ENCODE measurements at regions of chr5 and their contacts with region 1.

Region 1: GRCh38 chr5:56838409-56839039 is 23.2 kb downstream of the MAP3K1 start:
- DNase-seq: peak in 7 of 9 donors; percentile 33 to 61 (median 48)
- ATAC-seq: peak; percentile 75
- H3K4me3 ChIP-seq: no peak overlapping the region
- H3K4me3 Mint-ChIP-seq: peak overlapping the region; percentile 19 to 79 (median 57)
- H3K27ac ChIP-seq: peak overlapping the region; percentile 42
- H3K27ac Mint-ChIP-seq: peak overlapping the region; percentile 8 to 95 (median 78)
- H3K4me1 ChIP-seq: peaks cover 8 to 87% of the 10 kb centered on the region in 2 donors
- H3K4me1 Mint-ChIP-seq: peaks cover 63 to 95% (median 90%) of the 10 kb centered on the region in 7 donors
- H3K27me3 ChIP-seq: no peaks in the 10 kb centered on the region
- H3K27me3 Mint-ChIP-seq: no peaks in the 10 kb centered on the region

Region 2: GRCh38 chr5:55936100-55936693 is 902.3 kb before region 1 on chr5:
- CTCF ChIA-PET with region 1: interaction called, 3 read pairs
- POLR2A ChIA-PET with region 1: no interaction called
- intact Hi-C with region 1: loop called (anchors 1 to 5 kb)
- DNase-seq: peak; percentile 44 to 73 (median 66)
- ATAC-seq: peak; percentile 91
- H3K4me3 ChIP-seq: no peak overlapping the region
- H3K4me3 Mint-ChIP-seq: no peak overlapping the region
- H3K27ac ChIP-seq: no peak overlapping the region
- H3K27ac Mint-ChIP-seq: peak overlapping the region in 6 of 9 donors; percentile 11 to 84 (median 38)
- H3K4me1 ChIP-seq: no peaks in the 10 kb centered on the region
- H3K4me1 Mint-ChIP-seq: peaks cover 0 to 35% (median 14%) of the 10 kb centered on the region in 7 donors
- H3K27me3 ChIP-seq: no peaks in the 10 kb centered on the region
- H3K27me3 Mint-ChIP-seq: no peaks in the 10 kb centered on the region

Region 3: GRCh38 chr5:56264417-56265025 is 574.0 kb before region 1 on chr5:
- CTCF ChIA-PET with region 1: interaction called, 131 read pairs
- POLR2A ChIA-PET with region 1: no interaction called
- intact Hi-C with region 1: no loop called
- DNase-seq: peak in 3 of 9 donors; percentile 7 to 24 (median 9)
- ATAC-seq: peak; percentile 54
- H3K4me3 ChIP-seq: no peak overlapping the region
- H3K4me3 Mint-ChIP-seq: no peak overlapping the region
- H3K27ac ChIP-seq: no peak overlapping the region
- H3K27ac Mint-ChIP-seq: no peak overlapping the region
- H3K4me1 ChIP-seq: no peaks in the 10 kb centered on the region
- H3K4me1 Mint-ChIP-seq: peaks cover 2 to 4% (median 3%) of the 10 kb centered on the region in 7 donors
- H3K27me3 ChIP-seq: no peaks in the 10 kb centered on the region
- H3K27me3 Mint-ChIP-seq: peaks cover 0 to 19% (median 0%) of the 10 kb centered on the region in 5 donors

Region 4: GRCh38 chr5:56369361-56369811 is 469.1 kb before region 1 on chr5:
- CTCF ChIA-PET with region 1: no interaction called
- POLR2A ChIA-PET with region 1: no interaction called
- intact Hi-C with region 1: no loop called
- DNase-seq: no peak
- ATAC-seq: no peak
- H3K4me3 ChIP-seq: no peak overlapping the region
- H3K4me3 Mint-ChIP-seq: no peak overlapping the region
- H3K27ac ChIP-seq: no peak overlapping the region
- H3K27ac Mint-ChIP-seq: no peak overlapping the region
- H3K4me1 ChIP-seq: no peaks in the 10 kb centered on the region
- H3K4me1 Mint-ChIP-seq: no peaks in the 10 kb centered on the region
- H3K27me3 ChIP-seq: no peaks in the 10 kb centered on the region
- H3K27me3 Mint-ChIP-seq: peaks cover 0 to 1% (median 0%) of the 10 kb centered on the region in 5 donors

Region 5: GRCh38 chr5:56615361-56616153 is 223.0 kb before region 1 on chr5:
- CTCF ChIA-PET with region 1: no interaction called
- POLR2A ChIA-PET with region 1: no interaction called
- intact Hi-C with region 1: no loop called
- DNase-seq: no peak
- ATAC-seq: no peak
- H3K4me3 ChIP-seq: no peak overlapping the region
- H3K4me3 Mint-ChIP-seq: peak overlapping the region; percentile 35 to 80 (median 55)
- H3K27ac ChIP-seq: peak overlapping the region; percentile 56
- H3K27ac Mint-ChIP-seq: peak overlapping the region; percentile 56 to 89 (median 80)
- H3K4me1 ChIP-seq: peaks cover 27 to 59% of the 10 kb centered on the region in 2 donors
- H3K4me1 Mint-ChIP-seq: peaks cover 34 to 79% (median 64%) of the 10 kb centered on the region in 7 donors
- H3K27me3 ChIP-seq: no peaks in the 10 kb centered on the region
- H3K27me3 Mint-ChIP-seq: no peaks in the 10 kb centered on the region

Region 6: DNA sequence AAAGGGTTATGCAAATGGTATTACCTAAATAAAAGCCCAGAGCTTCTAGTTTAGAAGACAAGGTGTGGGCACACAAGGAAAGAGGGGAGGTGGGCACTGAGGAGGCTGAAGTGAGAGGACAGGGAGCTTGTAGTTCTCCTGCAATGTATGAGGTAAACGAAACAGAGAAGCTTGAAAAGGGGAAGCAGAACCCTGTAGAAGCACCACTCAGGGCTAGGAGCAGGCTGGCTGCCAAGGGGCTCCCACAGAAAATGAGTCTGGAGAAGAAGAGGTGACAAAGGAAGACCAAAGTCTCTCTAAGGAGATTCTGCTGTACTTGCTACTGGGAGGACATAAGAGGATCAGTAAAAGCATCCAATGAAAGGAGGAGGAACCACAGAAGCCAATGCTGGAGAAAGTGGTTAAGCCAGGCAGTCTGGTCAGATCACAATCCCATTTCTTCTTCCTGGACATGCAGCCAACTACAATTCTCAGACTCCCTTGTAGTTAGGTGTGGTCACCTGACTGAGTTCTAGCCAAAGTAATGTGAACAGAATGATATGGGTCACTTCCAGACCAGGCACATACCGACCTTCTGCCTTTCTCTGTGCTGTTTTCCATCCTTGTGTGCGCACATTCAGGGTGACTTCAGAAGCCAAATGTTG is 197.6 kb before region 1 on chr5:
- CTCF ChIA-PET with region 1: no interaction called
- POLR2A ChIA-PET with region 1: no interaction called
- intact Hi-C with region 1: no loop called
- DNase-seq: no peak
- ATAC-seq: no peak
- H3K4me3 ChIP-seq: no peak overlapping the region
- H3K4me3 Mint-ChIP-seq: no peak overlapping the region
- H3K27ac ChIP-seq: no peak overlapping the region
- H3K27ac Mint-ChIP-seq: peak overlapping the region in 1 of 9 donors; percentile 17
- H3K4me1 ChIP-seq: peaks cover 0 to 12% of the 10 kb centered on the region in 2 donors
- H3K4me1 Mint-ChIP-seq: peaks cover 0 to 57% (median 25%) of the 10 kb centered on the region in 7 donors
- H3K27me3 ChIP-seq: no peaks in the 10 kb centered on the region
- H3K27me3 Mint-ChIP-seq: peaks cover 0 to 18% (median 0%) of the 10 kb centered on the region in 5 donors

Region 7: DNA sequence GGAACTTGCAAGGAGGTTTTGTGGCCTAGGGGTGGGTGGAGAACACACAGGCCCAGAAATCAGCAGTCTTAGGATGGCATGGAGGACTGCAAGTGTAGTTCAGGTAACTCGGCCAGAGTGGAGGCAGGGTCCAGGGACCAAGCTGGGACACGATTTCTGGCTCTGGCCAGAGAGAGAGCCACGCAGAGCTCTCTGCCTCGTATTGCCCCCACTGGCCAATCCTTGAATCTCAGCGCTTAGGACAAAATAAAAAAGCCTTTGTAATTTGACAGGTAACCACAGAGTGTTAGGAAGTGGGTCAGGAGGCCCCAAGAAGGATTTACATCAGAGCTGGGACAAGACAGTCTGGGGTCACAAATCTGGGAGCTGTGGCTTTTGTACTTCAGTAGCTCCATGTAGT is 11.5 kb before region 1 on chr5:
- CTCF ChIA-PET with region 1: interaction called, 23 read pairs
- POLR2A ChIA-PET with region 1: interaction called, 6 read pairs
- intact Hi-C with region 1: no loop called
- DNase-seq: peak in 1 of 9 donors; percentile 34
- ATAC-seq: peak; percentile 37
- H3K4me3 ChIP-seq: no peak overlapping the region
- H3K4me3 Mint-ChIP-seq: peak overlapping the region; percentile 18 to 93 (median 59)
- H3K27ac ChIP-seq: peak overlapping the region; percentile 51
- H3K27ac Mint-ChIP-seq: peak overlapping the region in 8 of 9 donors; percentile 56 to 95 (median 80)
- H3K4me1 ChIP-seq: peaks cover 38 to 84% of the 10 kb centered on the region in 2 donors
- H3K4me1 Mint-ChIP-seq: peaks cover 75 to 100% (median 95%) of the 10 kb centered on the region in 7 donors
- H3K27me3 ChIP-seq: no peaks in the 10 kb centered on the region
- H3K27me3 Mint-ChIP-seq: no peaks in the 10 kb centered on the region

Region 8: DNA sequence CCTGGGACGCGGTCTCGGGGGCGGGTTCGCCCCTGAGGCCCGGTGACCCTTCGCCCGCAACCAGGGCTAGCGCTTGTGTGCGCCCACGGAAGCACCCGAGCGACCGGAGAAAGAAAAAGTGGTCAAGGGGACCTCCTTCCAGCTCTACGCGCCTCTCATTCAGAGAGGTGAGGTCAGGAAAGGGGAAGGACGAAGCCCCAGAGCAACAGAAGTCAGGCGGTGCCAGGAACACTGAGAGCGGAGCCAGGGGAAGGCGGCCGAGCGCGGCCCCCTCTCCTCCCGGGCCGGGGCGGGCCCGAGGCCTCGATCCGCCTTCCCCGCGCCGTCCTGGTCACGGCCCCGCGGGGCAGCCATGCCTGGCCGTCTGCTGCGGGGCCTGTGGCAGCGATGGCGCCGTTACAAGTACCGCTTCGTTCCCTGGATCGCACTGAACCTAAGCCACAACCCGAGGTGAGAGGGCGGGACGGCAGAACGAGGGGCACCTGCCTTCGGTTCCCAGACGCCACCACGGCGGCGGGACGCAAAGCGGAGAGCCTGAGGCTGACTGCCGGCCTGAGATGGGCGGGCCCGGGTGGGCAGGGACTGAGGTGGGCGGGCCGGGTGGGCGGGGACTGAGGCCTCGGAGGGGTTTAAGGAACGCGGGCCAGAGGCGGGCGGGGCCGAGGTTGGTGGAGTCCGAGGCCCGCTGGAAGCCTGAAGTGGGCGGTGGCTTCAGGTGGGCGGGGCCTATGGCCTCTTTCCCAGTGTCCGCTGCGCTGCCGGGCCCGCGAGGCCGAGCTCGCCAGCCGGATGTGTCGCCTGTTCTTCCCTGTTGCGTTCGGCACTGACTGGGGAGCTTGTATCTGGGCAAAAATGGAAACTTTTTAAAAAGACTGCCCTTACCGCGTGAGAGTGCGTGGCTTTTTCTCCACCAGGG is 71.0 kb after region 1 on chr5 and contains the start of gene SETD9:
- CTCF ChIA-PET with region 1: no interaction called
- POLR2A ChIA-PET with region 1: no interaction called
- intact Hi-C with region 1: no loop called
- DNase-seq: peak; percentile 67 to 94 (median 73)
- ATAC-seq: peak; percentile 90
- H3K4me3 ChIP-seq: peak within 1 kb of the TSS; percentile 75
- H3K4me3 Mint-ChIP-seq: peak within 1 kb of the TSS; percentile 88 to 100 (median 91)
- H3K27ac ChIP-seq: peak within 1 kb of the TSS; percentile 79
- H3K27ac Mint-ChIP-seq: peak within 1 kb of the TSS; percentile 81 to 97 (median 89)
- H3K4me1 ChIP-seq: no peaks in the 10 kb centered on the region
- H3K4me1 Mint-ChIP-seq: peaks cover 12 to 24% (median 21%) of the 10 kb centered on the region in 7 donors
- H3K27me3 ChIP-seq: no peaks in the 10 kb centered on the region
- H3K27me3 Mint-ChIP-seq: peaks cover 0 to 15% (median 0%) of the 10 kb centered on the region in 5 donors
- total RNA-seq, gene SETD9: 3.7 to 9.7 (median 6.6) TPM

Measured in naive thymus-derived CD4-positive, alpha-beta T cell (primary cell).